ENCODE measurements at regions of chr1 and their contacts with region 1.

Region 1: DNA sequence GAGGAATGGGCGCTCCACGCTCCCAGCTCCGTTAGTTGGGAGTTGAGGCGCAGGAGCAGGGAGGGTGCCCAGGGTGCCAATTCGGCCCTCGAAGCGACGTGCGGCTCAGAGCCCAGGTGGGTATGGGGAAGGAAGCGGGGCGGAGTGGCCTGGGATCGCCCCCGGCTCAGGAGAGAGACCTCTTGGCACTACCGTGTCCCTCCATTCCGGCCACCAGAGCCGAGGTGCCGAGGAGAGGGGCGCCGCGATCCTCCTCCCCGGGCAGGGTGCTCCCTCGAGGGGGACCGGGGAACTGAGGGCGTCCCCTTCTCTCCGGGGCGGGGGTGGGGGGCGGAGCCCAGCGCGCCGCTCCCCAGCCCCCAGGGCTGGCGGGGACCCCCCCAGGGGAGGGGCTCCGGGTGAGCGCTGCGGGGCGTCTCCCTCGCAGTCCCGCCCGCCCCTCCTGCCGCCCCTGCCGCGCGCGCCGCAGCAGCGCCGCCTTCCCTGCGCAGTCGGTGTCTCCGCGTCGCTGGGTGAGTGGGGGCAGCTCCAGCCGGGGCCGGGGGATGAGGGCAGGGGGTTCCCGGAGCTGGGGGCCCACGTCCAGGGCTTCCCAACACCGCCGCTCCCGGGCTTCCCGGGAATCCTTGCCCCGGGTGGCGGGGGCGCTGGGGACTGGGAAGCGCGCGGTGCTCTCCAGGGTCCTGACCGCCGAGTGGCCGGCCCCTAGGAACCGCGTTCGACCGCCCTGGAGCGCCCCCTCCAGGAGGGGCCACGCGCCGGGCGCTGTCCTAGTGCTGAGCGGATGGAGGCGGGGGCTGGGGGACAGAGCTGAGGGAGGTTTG is at the start of gene HPCA:
- DNase-seq: peak; percentile 38
- ATAC-seq: peak; percentile 67 to 90
- H3K4me3 ChIP-seq: peak within 1 kb of the TSS; percentile 36; the same call in 2 of the 3 replicates
- H3K27ac ChIP-seq: no peak within 1 kb of the TSS
- H3K4me1 ChIP-seq: peaks cover 4% of the 10 kb centered on the region; the same call in 1 of the 3 replicates
- CTCF ChIP-seq: peak; percentile 36
- EP300 ChIP-seq: no peak
- POLR2A ChIP-seq: no peak
- RAD21 ChIP-seq: peak in 1 of 2 experiments; percentile 17; a peak in 3 of 5 replicates
- polyA plus RNA-seq, gene HPCA: 0.08 and 0.34 TPM in 2 replicates

Region 2: DNA sequence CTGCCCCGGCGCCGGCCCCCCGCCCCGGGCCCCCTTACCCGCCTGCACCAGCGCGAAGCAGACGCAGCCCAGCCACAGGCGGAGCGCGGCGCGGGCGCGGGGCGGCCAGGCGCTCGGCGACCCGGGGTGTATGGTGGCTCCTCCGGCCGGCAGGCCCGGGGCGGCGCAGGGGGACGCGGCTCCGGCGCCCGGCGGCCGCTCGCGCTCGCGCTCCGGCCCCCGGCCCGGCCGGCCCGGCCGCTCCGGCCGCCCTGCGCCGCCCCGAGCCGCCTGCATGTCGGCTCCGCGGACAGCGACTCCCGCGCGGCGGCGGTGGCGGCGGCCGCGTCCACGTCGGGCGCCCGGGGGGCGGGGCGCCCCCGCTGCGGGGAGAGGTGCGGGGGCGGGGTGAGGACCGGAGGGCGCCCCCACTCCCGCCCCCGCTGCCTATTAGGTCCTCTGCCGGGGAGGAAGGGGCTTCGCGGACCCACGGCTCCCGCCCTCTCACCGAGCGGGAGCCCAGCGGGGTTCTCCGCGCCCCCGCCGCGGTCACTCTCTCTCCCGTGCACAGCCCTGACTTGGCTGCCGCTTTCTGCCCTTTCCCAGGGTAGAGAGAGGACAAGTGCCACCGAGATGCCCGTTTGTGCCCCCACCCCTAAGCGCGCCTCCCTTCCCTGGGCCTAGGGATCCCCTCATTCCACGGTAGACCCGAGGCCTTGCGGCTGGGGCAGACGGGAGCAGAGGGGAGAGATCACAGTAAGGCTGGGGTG is 15.4 kb before region 1 on chr1 and contains the start of gene FNDC5:
- CTCF ChIA-PET with region 1: interaction called, 25 read pairs
- POLR2A ChIA-PET with region 1: no interaction called
- DNase-seq: no peak
- ATAC-seq: peak; percentile 39 to 66
- H3K4me3 ChIP-seq: peak within 1 kb of the TSS; percentile 58
- H3K27ac ChIP-seq: peak within 1 kb of the TSS; percentile 52 to 84; a peak in 4 of 6 replicates
- H3K4me1 ChIP-seq: 0 out of 3 replicates have a peak, but pooled peaks cover 2% of the 10 kb centered on the region
- CTCF ChIP-seq: no peak
- EP300 ChIP-seq: no peak
- POLR2A ChIP-seq: no peak
- RAD21 ChIP-seq: no peak
- polyA plus RNA-seq, gene FNDC5: 0.26 and 0.78 TPM in 2 replicates

Region 3: GRCh38 chr1:32900951-32901822 is 15.0 kb after region 1 on chr1 and contains the start of gene TMEM54:
- CTCF ChIA-PET with region 1: interaction called, 30 read pairs
- POLR2A ChIA-PET with region 1: no interaction called
- DNase-seq: no peak
- ATAC-seq: peak; percentile 70 to 72
- H3K4me3 ChIP-seq: peak within 1 kb of the TSS; percentile 79
- H3K27ac ChIP-seq: peak within 1 kb of the TSS; percentile 80 to 97
- H3K4me1 ChIP-seq: peaks cover 14% of the 10 kb centered on the region; the same call in 2 of the 3 replicates
- CTCF ChIP-seq: no peak
- EP300 ChIP-seq: no peak
- POLR2A ChIP-seq: peak; percentile 50
- RAD21 ChIP-seq: no peak
- polyA plus RNA-seq, gene TMEM54: 22.1 and 32.6 TPM in 2 replicates

Region 4: DNA sequence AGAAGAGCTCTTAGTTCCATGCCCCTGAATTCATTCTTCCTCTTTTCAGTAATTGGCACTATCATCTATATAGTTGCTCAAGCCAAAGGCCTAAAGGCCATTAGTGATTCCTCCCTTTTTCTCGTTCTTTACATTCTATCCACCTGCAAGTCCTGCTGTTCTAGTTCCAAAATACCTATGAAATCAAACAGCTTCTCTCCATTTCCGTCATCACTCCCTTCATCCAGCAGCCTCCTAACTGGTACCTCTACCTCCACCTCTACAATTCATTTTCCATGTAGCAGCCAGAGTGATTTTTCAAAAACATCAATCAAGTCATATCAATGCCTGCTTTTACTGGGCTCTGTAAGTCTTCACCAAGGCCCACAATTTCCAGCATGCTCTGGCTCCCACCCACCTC is 25.7 kb after region 1 on chr1:
- CTCF ChIA-PET with region 1: no interaction called
- POLR2A ChIA-PET with region 1: no interaction called
- DNase-seq: no peak
- ATAC-seq: no peak
- H3K4me3 ChIP-seq: no peak overlapping the region
- H3K27ac ChIP-seq: peak overlapping the region; percentile 77 to 83
- H3K4me1 ChIP-seq: peaks cover 12% of the 10 kb centered on the region
- CTCF ChIP-seq: no peak
- EP300 ChIP-seq: no peak
- POLR2A ChIP-seq: no peak
- RAD21 ChIP-seq: no peak

Measured in A549 (cell line).